GM10248 (cell line): ENCODE measurements at regions of chr3 and their contacts with region 1.

Region 1: GRCh38 chr3:69306239-69307185 is 79.4 kb downstream of the FRMD4B start:
- DNase-seq: peak; percentile 68
- CTCF ChIP-seq: peak; percentile 93

Region 2: DNA sequence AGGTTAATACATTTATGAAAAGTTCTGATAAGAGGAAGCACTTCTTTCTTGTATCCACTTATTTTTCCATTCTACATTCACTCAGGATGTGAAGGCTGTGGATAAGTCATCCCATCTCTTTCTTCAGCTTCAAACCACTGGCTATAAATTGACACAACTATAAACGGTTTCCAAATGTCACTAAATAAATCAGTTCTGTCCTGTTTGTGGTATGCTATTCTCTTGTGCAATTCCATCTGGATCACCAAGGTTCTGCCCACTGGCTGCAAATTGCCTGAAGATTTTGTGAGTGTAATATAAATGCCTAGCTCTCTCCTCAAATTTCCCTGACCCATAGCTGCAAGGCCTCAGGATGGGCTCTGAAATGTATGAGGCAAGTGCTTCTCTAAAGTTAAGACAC is 177.0 kb before region 1 on chr3:
- CTCF ChIA-PET with region 1: interaction called, 12 read pairs
- POLR2A ChIA-PET with region 1: no interaction called
- DNase-seq: no peak
- CTCF ChIP-seq: no peak

Region 3: DNA sequence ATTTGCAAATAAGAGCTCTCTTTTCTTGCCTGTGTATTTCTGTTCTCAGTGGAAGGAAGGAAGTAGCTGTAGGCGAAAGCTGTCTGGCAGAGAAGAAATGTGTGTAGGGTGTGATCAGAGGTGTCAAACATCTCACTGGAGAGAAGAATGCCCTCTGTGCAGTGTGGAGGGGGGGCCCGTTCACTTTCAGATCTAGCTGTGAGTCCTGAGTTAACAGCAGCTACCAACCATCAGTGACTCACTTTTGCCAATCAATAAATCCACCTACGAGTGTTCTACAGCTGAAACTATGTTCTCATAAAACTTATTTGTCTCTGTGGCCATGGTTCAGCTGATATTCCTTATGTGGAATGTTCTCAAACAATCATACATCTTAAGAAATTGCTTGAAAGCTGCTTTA is 24.3 kb before region 1 on chr3:
- CTCF ChIA-PET with region 1: interaction called, 13 read pairs
- POLR2A ChIA-PET with region 1: no interaction called
- DNase-seq: peak; percentile 19
- CTCF ChIP-seq: no peak

Region 4: DNA sequence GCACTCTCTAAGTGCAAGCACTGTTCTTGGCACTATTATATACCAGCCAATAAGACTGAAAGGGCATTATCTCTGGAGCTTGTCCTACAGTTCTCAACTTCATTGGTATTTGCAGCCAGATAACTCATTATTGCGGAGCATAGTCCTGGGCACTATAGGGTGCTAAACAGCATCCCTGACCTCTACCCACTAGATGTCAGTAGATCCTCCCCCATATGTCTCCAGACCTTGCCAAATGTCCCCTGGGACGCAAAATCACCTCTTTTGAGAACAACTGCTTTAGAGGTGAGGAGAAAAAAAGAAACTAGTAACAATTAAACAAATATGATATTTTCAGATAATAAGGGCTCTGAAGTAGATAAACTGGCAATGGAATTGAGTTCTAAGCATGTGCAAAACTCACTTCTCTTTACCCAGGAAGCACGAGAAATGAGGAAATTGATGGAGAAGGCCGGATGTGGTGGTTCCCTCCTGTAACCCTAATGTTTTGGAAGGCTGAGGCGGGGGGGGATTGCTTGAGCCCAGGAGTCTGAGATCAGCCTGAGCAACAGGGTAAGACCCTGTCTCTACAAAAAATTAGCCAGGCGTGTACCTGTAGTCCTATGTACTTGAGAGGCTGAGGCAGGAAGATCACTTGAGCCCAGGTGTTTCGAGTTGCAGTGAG is 18.0 kb after region 1 on chr3:
- CTCF ChIA-PET with region 1: interaction called, 72 read pairs
- POLR2A ChIA-PET with region 1: no interaction called
- DNase-seq: no peak
- CTCF ChIP-seq: peak; percentile 46

Region 5: DNA sequence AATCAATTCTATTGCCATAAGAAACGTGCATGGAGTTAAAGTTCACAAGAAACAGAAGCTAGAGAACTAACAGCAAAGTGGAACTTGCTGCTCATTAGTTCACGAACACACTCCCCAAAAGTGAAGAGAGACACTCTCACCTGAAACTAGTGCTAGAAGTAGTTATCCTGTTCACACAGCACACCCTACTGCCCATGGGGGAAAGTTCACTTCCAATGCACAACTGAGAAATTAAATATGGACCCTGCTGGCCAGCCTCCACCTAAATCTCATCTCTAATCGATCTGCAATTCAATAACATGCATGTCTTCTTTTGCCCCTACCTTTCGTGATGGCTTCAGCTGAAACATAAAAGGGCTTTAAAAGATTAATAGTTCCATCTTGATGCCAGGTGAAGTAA is 118.7 kb after region 1 on chr3:
- CTCF ChIA-PET with region 1: interaction called, 11 read pairs
- POLR2A ChIA-PET with region 1: no interaction called
- DNase-seq: peak; percentile 37
- CTCF ChIP-seq: peak; percentile 51